ENCODE measurements at regions of chr10 and their contacts with region 1.

Region 1: DNA sequence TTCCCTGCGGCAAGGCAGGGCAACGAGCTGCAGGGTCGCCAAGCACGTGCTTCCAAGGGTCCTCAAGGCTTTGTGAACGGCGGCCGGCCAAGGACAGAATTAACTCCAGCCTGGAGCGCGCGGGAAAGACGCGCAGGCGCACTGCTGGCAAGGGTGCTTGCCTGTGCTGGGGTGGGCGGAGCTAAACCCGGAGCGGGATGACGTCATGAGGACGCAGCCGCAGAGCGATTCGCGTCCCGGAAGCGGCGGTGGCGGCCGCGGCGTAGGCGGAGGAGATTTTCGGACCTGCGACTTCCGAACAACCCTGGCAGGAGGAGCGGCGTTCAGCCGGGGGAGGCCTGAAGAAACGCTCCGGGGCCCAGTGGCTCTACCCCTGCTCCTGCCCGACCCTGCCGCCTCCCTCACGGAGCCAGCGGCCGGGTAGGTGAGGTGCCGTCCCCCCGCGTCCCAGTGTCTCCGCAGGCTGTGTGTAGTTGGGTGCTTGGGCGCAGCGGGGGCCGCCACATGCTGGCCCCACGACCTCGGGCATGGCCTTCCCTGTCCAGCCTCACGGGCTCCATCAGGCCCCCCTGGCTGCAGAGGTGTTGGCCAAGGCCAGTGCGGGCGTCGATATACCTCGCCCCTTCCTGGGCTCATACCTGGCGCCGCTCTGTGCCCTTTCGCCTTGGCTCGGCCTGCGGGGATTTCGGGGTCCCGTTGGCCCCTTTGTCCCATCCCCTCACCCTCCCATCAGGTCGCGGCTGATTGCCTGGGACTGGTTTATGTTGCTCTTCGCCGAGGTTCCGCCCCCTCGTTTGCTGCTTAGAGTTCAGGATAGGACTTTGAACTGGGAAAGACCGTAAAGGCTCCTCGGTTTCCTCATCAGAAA is at the start of gene ZFYVE27:
- DNase-seq: peak; percentile 89 to 96 (median 94)
- ATAC-seq: peak; percentile 85 to 88
- H3K4me3 Mint-ChIP-seq: peak within 1 kb of the TSS; percentile 93 to 99 (median 96)
- H3K27ac Mint-ChIP-seq: peak within 1 kb of the TSS; percentile 92 to 99 (median 98)
- H3K4me1 Mint-ChIP-seq: peaks cover 31 to 56% (median 52%) of the 10 kb centered on the region in 4 donors
- H3K27me3 Mint-ChIP-seq: no peaks in the 10 kb centered on the region
- polyA plus RNA-seq, gene ZFYVE27: 29.1 to 37.9 (median 34.1) TPM

Region 2: DNA sequence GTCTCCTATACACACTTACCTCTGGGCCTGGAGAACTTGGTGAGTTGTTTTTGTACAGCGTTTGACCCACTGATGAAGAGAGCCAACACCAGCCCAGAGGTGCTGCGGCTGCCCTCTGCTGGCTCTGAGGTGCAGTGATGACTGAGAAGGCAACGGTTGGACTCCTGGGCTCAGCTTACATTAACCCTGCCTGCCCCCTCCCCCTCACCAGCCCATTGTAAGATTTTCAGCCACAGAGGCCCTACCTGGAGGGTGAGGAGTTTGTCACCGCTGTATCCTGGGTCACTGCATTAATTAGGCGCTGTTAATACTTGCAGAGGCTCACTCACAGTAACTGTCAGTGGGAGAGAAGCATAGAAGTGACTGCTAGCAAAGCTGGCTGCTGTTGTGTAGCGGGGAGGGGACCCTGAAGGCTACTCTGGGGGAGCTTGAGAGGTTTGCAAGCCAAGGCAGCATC is 183.5 kb before region 1 on chr10:
- POLR2A ChIA-PET with region 1: no interaction called
- DNase-seq: peak; percentile 28 to 72 (median 41)
- ATAC-seq: peak; percentile 84 to 94
- H3K4me3 Mint-ChIP-seq: no peak overlapping the region
- H3K27ac Mint-ChIP-seq: peak overlapping the region in 1 of 10 donors; percentile 14
- H3K4me1 Mint-ChIP-seq: no peaks in the 10 kb centered on the region
- H3K27me3 Mint-ChIP-seq: no peaks in the 10 kb centered on the region

Region 3: DNA sequence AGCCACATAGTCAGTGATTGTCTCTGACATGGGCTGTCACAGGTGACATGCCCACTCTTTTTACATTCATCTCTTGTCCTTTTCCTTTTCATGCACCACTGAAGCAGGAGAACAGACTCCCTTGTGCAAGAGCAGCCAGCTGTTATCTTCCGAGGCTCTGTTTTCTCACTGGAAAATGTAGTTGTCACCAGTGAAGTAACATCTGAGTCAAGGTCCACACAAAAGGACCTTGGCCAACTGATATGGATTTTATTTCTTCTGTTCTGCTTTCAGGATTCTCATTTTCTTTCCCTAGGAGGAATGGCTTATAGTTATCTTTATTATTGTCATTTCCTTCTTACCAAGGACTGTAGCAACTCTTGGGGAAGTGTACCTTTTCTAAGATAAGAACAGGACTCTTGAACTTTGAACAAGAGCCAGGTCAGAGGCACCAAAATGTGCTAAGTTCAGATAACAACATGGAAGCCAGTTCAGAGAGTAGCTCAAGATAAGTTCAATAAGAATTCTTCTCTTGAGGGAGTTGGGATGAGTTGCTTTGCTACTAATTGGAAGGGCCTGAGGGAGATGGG is 72.8 kb before region 1 on chr10:
- POLR2A ChIA-PET with region 1: no interaction called
- DNase-seq: no peak
- ATAC-seq: no peak
- H3K4me3 Mint-ChIP-seq: no peak overlapping the region
- H3K27ac Mint-ChIP-seq: no peak overlapping the region
- H3K4me1 Mint-ChIP-seq: peaks cover 0 to 4% (median 2%) of the 10 kb centered on the region in 4 donors
- H3K27me3 Mint-ChIP-seq: no peaks in the 10 kb centered on the region

Region 4: GRCh38 chr10:97686962-97687784 is 50.0 kb before region 1 on chr10 and contains the start of gene AVPI1:
- POLR2A ChIA-PET with region 1: interaction called, 31 read pairs
- DNase-seq: peak; percentile 92 to 98 (median 97)
- ATAC-seq: peak; percentile 90 to 92
- H3K4me3 Mint-ChIP-seq: peak within 1 kb of the TSS; percentile 83 to 94 (median 88)
- H3K27ac Mint-ChIP-seq: peak within 1 kb of the TSS; percentile 58 to 95 (median 92)
- H3K4me1 Mint-ChIP-seq: peaks cover 8 to 33% (median 24%) of the 10 kb centered on the region in 4 donors
- H3K27me3 Mint-ChIP-seq: no peaks in the 10 kb centered on the region
- polyA plus RNA-seq, gene AVPI1: 2.2 to 3.8 (median 3.2) TPM

Region 5: DNA sequence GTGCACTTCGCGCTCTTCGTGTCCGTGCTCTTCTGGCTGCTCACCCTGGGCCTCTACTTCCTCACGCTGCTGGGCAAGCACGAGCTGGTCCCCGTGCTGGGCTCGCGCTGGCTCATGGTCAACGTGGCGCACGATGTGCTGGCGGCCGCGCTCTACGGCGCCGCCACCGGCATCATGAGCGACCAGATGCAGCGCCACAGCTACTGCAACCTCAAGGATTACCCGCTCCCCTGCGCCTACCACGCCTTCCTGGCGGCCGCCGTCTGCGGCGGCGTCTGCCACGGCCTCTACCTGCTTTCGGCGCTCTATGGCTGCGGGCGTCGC is 23.1 kb before region 1 on chr10:
- POLR2A ChIA-PET with region 1: interaction called, 13 read pairs
- DNase-seq: peak in 8 of 10 donors; percentile 18 to 69 (median 38)
- ATAC-seq: peak; percentile 86 to 87
- H3K4me3 Mint-ChIP-seq: peak overlapping the region; percentile 94 to 100 (median 98)
- H3K27ac Mint-ChIP-seq: peak overlapping the region; percentile 18 to 94 (median 83)
- H3K4me1 Mint-ChIP-seq: peaks cover 8 to 20% (median 14%) of the 10 kb centered on the region in 4 donors
- H3K27me3 Mint-ChIP-seq: peaks cover 7 to 33% (median 11%) of the 10 kb centered on the region in 5 donors